Motor neuron (in vitro differentiated cells): ENCODE measurements at regions of chr14 and their contacts with region 1.

Region 1: GRCh38 chr14:36661756-36662498 is at the start of gene PAX9:
- ATAC-seq: peak; percentile 83 to 95 (median 90)
- H3K4me3 ChIP-seq: peak within 1 kb of the TSS; percentile 7 to 35 (median 28)
- H3K27ac ChIP-seq: no peak within 1 kb of the TSS
- H3K4me1 ChIP-seq: peaks cover 13 to 21% of the 10 kb centered on the region in 2 donors
- total RNA-seq, gene PAX9: 0.16 to 7.1 (median 1.1) TPM

Region 2: DNA sequence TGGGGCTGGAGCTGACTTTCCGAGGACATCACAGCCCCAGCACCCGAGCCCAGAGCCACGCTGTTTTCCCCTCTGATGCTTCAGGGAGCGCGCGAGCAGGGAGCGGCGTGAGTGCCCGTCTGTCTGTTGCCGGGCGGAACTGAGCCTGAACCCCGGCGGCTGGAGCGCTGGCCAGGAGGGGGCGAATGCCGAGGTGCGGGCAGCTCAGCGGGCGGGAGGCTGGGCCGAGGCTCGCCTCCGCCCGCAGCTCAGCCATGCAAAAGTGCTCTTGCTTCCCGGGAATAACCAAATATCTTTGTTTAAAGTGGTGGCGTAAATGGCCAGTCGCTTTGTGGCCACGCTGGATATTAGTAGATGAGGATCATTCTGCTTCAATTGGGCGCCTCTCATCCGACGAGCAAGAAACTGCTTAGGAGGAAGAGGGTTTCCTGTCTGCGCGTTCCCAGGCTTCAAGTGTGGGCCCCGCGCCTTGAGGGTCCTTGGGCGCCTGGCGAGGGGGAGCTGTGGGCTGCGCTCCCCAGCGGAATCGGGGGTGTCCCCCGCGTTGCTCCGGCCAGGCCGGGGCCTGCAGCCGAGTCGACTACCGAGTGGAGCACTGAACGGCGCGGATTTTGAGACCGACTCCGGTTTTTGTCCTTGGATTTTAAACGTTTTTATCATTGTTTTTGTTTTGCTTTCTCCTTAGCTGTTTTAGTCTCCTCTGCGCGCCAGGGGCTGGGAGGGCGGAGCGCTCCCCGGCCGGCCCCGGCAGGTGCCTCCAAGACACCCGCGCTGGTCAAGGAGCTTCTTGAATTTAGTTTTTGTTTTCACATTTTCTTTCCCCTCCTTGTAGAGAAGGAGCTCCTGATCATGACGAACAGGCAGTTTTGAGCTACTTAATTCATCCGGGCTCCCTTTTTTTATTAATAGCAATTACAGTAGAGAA is 141.1 kb before region 1 on chr14:
- in situ Hi-C with region 1: loop called in 1 of 9 experiments (anchors 25 kb)
- ATAC-seq: peak; percentile 50 to 79 (median 70)
- H3K4me3 ChIP-seq: peak overlapping the region in 1 of 5 donors; percentile 14
- H3K27ac ChIP-seq: no peak overlapping the region
- H3K4me1 ChIP-seq: peaks cover 0 to 27% of the 10 kb centered on the region in 2 donors

Region 3: GRCh38 chr14:36941783-36942521 is 280.0 kb after region 1 on chr14:
- in situ Hi-C with region 1: loop called in 3 of 9 experiments (anchors 10 to 25 kb)
- ATAC-seq: peak in 7 of 8 experiments; percentile 11 to 84 (median 50)
- H3K4me3 ChIP-seq: no peak overlapping the region
- H3K27ac ChIP-seq: no peak overlapping the region
- H3K4me1 ChIP-seq: no peaks in the 10 kb centered on the region